Ascending aorta (tissue), 2 donors: ENCODE measurements at regions of chr3 and their contacts with region 1.

Region 1: GRCh38 chr3:196942226-196942914 is at the start of gene NCBP2:
- DNase-seq: peak; percentile 95 to 99
- H3K4me3 ChIP-seq: peak within 1 kb of the TSS; percentile 93 to 100
- H3K27ac ChIP-seq: peak within 1 kb of the TSS; percentile 88 to 96
- H3K4me1 ChIP-seq: peaks cover 14 to 17% of the 10 kb centered on the region in 2 donors
- H3K27me3 ChIP-seq: no peaks in the 10 kb centered on the region
- CTCF ChIP-seq: peak; percentile 56 to 68 (median 61)
- total RNA-seq, gene NCBP2: 16.9 TPM

Region 2: DNA sequence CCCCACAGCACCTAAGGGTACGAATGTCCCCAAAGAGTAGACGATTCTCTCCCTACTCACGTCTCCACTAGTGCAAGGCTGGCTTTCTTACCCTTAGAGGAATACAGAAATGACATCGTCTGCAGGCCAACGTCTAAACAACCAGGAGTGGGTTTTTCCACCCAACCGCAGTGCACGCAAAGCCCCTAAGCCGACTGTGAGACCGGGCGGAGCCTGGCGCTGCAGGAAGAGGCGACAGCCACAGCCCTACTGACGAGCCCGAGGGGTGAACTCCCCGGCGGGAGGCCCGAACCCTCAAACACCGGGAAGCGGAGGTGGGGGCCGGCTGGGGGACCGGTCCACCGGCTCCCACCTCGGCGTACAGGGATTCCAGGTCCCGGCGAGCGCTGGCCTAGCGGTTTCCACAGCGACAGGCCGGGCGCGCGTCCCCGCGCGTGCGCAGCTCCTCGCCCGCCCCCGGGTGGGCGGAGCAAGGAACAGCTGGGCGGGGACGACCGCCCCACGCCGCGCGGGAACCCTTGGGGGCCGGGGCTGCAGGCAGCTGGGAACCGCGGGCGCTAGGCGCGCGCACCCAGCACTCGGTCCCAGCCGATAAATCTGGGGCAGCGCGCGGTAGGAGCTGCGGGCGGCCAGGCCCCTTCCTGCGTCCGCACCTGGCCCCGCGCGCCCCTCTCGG is 230.4 kb before region 1 on chr3 and contains the starts of genes CEP19 and PIGX:
- intact Hi-C with region 1: loop called (anchors 5 kb)
- DNase-seq: peak; percentile 27 to 90
- H3K4me3 ChIP-seq: peak within 1 kb of the TSS; percentile 85 to 87
- H3K27ac ChIP-seq: peak within 1 kb of the TSS; percentile 86 to 91
- H3K4me1 ChIP-seq: peaks cover 0 to 8% of the 10 kb centered on the region in 2 donors
- H3K27me3 ChIP-seq: no peaks in the 10 kb centered on the region
- CTCF ChIP-seq: no peak
- total RNA-seq, gene CEP19: 2.6 TPM
- total RNA-seq, gene PIGX: 47.7 TPM

Region 3: GRCh38 chr3:196739671-196740480 is 202.5 kb before region 1 on chr3 and contains the start of gene PAK2:
- intact Hi-C with region 1: loop called (anchors 5 kb)
- DNase-seq: peak; percentile 70 to 95
- H3K4me3 ChIP-seq: peak within 1 kb of the TSS; percentile 80 to 92
- H3K27ac ChIP-seq: peak within 1 kb of the TSS; percentile 98 to 99
- H3K4me1 ChIP-seq: peaks cover 4 to 12% of the 10 kb centered on the region in 2 donors
- H3K27me3 ChIP-seq: no peaks in the 10 kb centered on the region
- CTCF ChIP-seq: no peak
- total RNA-seq, gene PAK2: 24.4 TPM

Region 4: GRCh38 chr3:196867507-196868296 is 74.7 kb before region 1 on chr3 and contains the start of gene SENP5:
- intact Hi-C with region 1: loop called (anchors 1 kb)
- DNase-seq: peak; percentile 45 to 93
- H3K4me3 ChIP-seq: peak within 1 kb of the TSS; percentile 57 to 89
- H3K27ac ChIP-seq: peak within 1 kb of the TSS; percentile 95 to 96
- H3K4me1 ChIP-seq: peaks cover 9 to 12% of the 10 kb centered on the region in 2 donors
- H3K27me3 ChIP-seq: no peaks in the 10 kb centered on the region
- CTCF ChIP-seq: no peak
- total RNA-seq, gene SENP5: 11.0 TPM

Region 5: GRCh38 chr3:196969660-196970546 is 27.5 kb after region 1 on chr3:
- intact Hi-C with region 1: loop called (anchors 2 kb)
- DNase-seq: no peak
- H3K4me3 ChIP-seq: peak overlapping the region; percentile 89 to 92
- H3K27ac ChIP-seq: peak overlapping the region in 1 of 2 donors; percentile 70
- H3K4me1 ChIP-seq: peaks cover 0 to 3% of the 10 kb centered on the region in 2 donors
- H3K27me3 ChIP-seq: no peaks in the 10 kb centered on the region
- CTCF ChIP-seq: peak in 2 of 3 experiments; percentile 55 to 94